Activated T-helper 1 cell treated with anti-CD3 and anti-CD28 coated beads, Interleukin-12 subunit alpha, Interleukin-12 subunit beta, Interleukin-2, Interleukin-4 antibody, amounts not matched to agents 30 ng/mL and 10 ng/mL and 1 ng/mL, durations not matched to agents 14 hours and 24 hours and 36 hours (primary cell): ENCODE measurements at regions of chr14 and their contacts with region 1.

Region 1: DNA sequence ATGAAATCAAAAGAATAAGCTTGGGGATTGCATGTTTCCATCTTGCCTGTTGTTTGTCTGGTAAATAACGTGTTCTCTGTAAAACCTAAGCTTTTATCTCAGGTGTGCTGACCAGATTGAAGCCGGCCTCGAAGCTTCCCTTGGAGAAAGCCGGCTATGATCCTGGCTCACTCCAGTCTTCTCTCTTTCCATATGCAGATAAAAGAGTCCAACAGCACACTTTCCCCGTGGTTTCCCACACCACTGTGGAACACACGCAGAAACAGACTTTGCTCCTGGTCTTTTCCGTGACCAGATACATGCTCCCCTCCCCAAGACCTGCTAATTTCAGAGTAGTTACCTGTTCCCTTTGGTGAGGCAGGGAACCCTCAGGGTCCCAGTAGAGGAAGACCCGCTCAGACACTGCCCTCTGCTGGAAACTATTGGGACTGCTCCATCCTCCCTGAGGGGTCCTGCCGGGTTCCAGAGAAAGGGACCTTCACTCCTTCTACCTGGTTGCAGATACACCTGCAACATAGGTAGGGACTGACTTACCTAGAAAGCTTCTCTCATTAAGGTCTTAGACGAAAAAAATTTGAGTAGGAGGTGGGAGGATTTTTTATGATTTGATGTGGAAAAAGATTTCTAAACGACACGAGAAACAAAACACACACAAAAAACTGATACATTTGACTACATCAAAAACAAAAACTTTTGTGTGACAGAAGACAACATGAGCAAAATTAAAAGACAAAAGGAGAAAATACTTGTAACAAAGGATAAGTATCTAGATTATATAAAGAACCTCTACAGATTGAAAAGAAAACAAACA is 415.5 kb upstream of the CCDC196 start:
- DNase-seq: peak; percentile 48
- H3K4me3 Mint-ChIP-seq: no peak overlapping the region
- H3K27ac Mint-ChIP-seq: no peak overlapping the region
- H3K4me1 Mint-ChIP-seq: peaks cover 13% of the 10 kb centered on the region
- H3K27me3 Mint-ChIP-seq: peaks cover 16% of the 10 kb centered on the region

Region 2: GRCh38 chr14:65824285-65824977 is 246.3 kb before region 1 on chr14:
- intact Hi-C with region 1: loop called (anchors 10 kb)
- DNase-seq: peak; percentile 53
- H3K4me3 Mint-ChIP-seq: no peak overlapping the region
- H3K27ac Mint-ChIP-seq: no peak overlapping the region
- H3K4me1 Mint-ChIP-seq: peaks cover 28% of the 10 kb centered on the region
- H3K27me3 Mint-ChIP-seq: peaks cover 9% of the 10 kb centered on the region

Region 3: GRCh38 chr14:65940056-65940733 is 130.5 kb before region 1 on chr14:
- intact Hi-C with region 1: no loop called
- DNase-seq: no peak
- H3K4me3 Mint-ChIP-seq: no peak overlapping the region
- H3K27ac Mint-ChIP-seq: no peak overlapping the region
- H3K4me1 Mint-ChIP-seq: peaks cover 52% of the 10 kb centered on the region
- H3K27me3 Mint-ChIP-seq: peaks cover 3% of the 10 kb centered on the region

Region 4: GRCh38 chr14:66163023-66163422 is 92.3 kb after region 1 on chr14:
- intact Hi-C with region 1: no loop called
- DNase-seq: no peak
- H3K4me3 Mint-ChIP-seq: no peak overlapping the region
- H3K27ac Mint-ChIP-seq: no peak overlapping the region
- H3K4me1 Mint-ChIP-seq: no peaks in the 10 kb centered on the region
- H3K27me3 Mint-ChIP-seq: peaks cover 12% of the 10 kb centered on the region